Naive thymus-derived CD8-positive, alpha-beta T cell (primary cell): ENCODE measurements at regions of chr1 and their contacts with region 1.

Region 1: DNA sequence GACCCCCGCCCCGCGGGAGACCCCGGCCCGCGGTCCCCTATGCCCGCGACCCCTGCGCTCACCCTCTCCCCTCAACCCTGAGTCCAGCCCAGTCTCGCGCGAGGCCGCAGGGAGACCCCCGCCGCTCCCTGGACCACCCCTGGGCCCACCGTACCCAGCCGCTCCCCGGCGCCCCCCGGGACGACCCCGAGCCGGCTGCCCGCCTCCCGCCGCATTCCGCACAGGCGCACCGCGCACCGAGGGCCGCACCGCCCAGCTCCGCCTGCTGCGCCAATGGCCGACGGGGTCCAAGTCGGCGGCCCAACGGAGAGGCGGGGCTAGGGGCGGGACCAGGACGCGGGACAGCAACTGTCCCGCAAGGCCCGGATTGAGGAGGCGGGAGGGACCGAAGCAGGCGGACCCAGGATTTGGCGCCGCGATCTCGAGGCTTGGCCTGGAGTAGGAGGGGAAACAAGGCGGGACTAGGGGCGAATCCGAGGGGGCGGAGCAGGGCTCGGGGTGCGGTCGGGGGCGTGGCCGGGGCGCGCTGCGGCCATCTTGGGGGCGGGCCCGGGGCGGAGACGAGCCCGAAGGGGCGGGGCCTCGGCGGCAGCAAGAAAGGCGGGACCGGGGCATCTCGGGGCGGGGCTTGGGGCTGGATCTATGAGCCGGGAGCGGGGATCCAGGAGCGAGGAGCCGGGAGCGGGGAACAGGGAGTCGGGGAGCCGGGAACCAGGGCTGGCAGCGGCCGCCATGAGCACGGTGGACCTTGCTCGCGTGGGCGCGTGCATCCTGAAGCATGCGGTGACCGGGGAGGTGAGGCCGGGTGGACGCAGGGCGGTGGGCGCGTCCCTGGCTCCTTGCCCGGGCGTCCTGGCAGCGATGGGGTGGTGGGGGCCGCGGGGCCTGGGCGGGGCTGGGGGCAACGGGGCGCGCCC is at the start of gene PRXL2B:
- DNase-seq: peak; percentile 91 to 100 (median 96)
- ATAC-seq: peak; percentile 57 to 65
- H3K4me3 Mint-ChIP-seq: peak within 1 kb of the TSS; percentile 88 to 96 (median 92)
- H3K27ac Mint-ChIP-seq: peak within 1 kb of the TSS; percentile 88 to 99 (median 97)
- H3K4me1 Mint-ChIP-seq: peaks cover 26 to 49% (median 42%) of the 10 kb centered on the region in 4 donors
- H3K27me3 Mint-ChIP-seq: no peaks in the 10 kb centered on the region
- polyA plus RNA-seq, gene PRXL2B: 20.6 to 37.5 (median 27.4) TPM

Region 2: GRCh38 chr1:2412519-2413233 is 173.7 kb before region 1 on chr1 and contains the start of gene PEX10:
- POLR2A ChIA-PET with region 1: interaction called, 65 read pairs
- DNase-seq: peak; percentile 96 to 100 (median 98)
- ATAC-seq: peak; percentile 78 to 88
- H3K4me3 Mint-ChIP-seq: peak within 1 kb of the TSS; percentile 77 to 91 (median 86)
- H3K27ac Mint-ChIP-seq: peak within 1 kb of the TSS; percentile 55 to 96 (median 87)
- H3K4me1 Mint-ChIP-seq: peaks cover 27 to 54% (median 41%) of the 10 kb centered on the region in 4 donors
- H3K27me3 Mint-ChIP-seq: no peaks in the 10 kb centered on the region
- polyA plus RNA-seq, gene PEX10: 7.5 to 10.4 (median 9.1) TPM

Region 3: DNA sequence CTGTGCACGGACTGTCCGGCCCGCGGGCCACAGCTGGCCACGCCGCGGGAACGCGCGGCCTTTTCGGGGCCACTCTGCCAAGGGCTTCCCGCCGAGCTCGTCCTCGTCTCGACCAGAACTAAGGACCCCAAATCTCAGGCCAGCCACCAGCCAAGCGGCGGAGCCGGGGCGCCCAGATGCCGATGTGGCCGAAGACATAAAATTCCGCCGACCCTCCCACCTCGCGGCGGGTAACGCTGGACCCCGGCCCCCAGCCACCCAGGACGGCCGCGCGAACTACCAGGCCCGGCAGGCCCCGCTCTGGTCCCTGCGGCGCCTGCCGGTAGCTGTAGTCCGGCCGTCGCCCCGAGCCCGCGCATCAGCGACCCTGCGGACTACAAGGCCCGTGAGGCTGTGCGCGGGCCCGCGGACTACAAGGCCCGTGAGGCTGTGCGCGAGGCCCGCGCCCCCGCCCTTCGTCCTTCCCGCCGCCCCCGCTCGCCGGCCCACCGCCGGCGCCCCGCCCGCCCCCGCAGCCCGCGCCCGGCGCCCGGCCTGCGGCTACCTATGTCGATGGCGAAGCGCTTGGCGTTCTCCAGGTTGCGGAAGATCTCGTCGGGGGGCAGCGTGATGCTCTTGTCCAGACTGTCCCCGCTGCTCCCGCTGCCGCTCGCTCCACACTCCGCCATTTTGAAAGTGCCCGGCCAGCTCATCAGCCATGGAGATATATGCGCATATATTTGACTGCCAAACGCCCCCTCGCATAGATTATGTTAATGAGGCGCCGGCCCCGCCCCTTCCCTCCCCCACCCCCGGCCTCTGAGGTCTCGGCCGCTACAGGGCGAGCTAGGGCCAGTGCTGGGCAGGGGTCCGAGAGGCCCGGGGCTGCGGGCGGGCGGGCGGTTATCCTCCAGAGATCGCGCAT is 60.2 kb before region 1 on chr1 and contains the start of gene PANK4:
- POLR2A ChIA-PET with region 1: interaction called, 70 read pairs
- DNase-seq: peak; percentile 79 to 91 (median 88)
- ATAC-seq: peak; percentile 77 to 85
- H3K4me3 Mint-ChIP-seq: peak within 1 kb of the TSS; percentile 88 to 99 (median 92)
- H3K27ac Mint-ChIP-seq: peak within 1 kb of the TSS; percentile 79 to 99 (median 96)
- H3K4me1 Mint-ChIP-seq: peaks cover 32 to 58% (median 49%) of the 10 kb centered on the region in 4 donors
- H3K27me3 Mint-ChIP-seq: peaks cover 0 to 6% (median 3%) of the 10 kb centered on the region in 5 donors
- polyA plus RNA-seq, gene PANK4: 9.0 to 31.7 (median 13.4) TPM

Region 4: DNA sequence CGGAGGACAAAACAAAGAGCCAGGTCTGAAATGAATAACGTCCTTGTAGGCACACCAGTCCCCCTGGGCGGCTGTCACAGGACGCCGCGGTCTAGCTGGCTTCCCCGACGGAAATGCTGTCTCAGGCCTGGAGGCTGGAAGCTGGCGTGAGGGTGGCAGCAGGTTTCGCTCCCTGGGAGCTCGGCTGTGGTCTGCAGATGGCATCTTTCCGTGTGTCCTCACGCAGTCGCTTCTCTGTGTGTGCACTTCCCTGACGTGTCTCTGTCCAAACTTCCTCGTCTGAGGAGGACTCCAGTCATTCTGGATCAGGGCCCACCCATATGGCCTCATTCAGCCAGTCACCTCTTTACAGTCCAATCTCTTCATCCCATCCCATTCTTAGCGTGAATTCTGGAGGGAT is 16.1 kb before region 1 on chr1:
- POLR2A ChIA-PET with region 1: interaction called, 408 read pairs
- DNase-seq: no peak
- ATAC-seq: no peak
- H3K4me3 Mint-ChIP-seq: no peak overlapping the region
- H3K27ac Mint-ChIP-seq: peak overlapping the region in 5 of 10 donors; percentile 9 to 47 (median 34)
- H3K4me1 Mint-ChIP-seq: peaks cover 2 to 24% (median 10%) of the 10 kb centered on the region in 4 donors
- H3K27me3 Mint-ChIP-seq: no peaks in the 10 kb centered on the region